Body of pancreas (tissue), 4 donors: ENCODE measurements at regions of chr19 and their contacts with region 1.

Region 1: GRCh38 chr19:10936661-10937084 is 8.1 kb downstream of the TIMM29 start:
- DNase-seq: peak; percentile 55 to 77 (median 65)
- ATAC-seq: peak; percentile 70
- H3K4me3 ChIP-seq: no peak overlapping the region
- H3K27ac ChIP-seq: peak overlapping the region in 3 of 4 donors; percentile 51 to 61 (median 55)
- H3K4me1 ChIP-seq: peaks cover 39% of the 10 kb centered on the region
- H3K27me3 ChIP-seq: no peaks in the 10 kb centered on the region
- CTCF ChIP-seq: peak; percentile 53 to 89 (median 83)
- POLR2A ChIP-seq: no peak

Region 2: GRCh38 chr19:11106477-11106876 is 169.8 kb after region 1 on chr19:
- intact Hi-C with region 1: loop called (anchors 10 kb)
- DNase-seq: peak in 1 of 4 donors; percentile 33
- ATAC-seq: no peak
- H3K4me3 ChIP-seq: no peak overlapping the region
- H3K27ac ChIP-seq: no peak overlapping the region
- H3K4me1 ChIP-seq: no peaks in the 10 kb centered on the region
- H3K27me3 ChIP-seq: no peaks in the 10 kb centered on the region
- CTCF ChIP-seq: no peak
- POLR2A ChIP-seq: no peak